K562 (cell line): ENCODE measurements at regions of chrX and their contacts with region 1.

Region 1: GRCh38 chrX:47158131-47158530 is 13.1 kb downstream of the RBM10 start:
- DNase-seq: peak in 3 of 4 experiments; percentile 15 to 32 (median 29)
- ATAC-seq: peak; percentile 81
- H3K4me3 ChIP-seq: no peak overlapping the region
- H3K27ac ChIP-seq: no peak overlapping the region
- H3K4me1 ChIP-seq: peaks cover 0 to 5% of the 10 kb centered on the region in 2 experiments; a peak in 2 of 5 replicates
- H3K27me3 ChIP-seq: no peaks in the 10 kb centered on the region
- CTCF ChIP-seq: 0 out of 6 replicates have a peak, but pooled peaks of 1 of the 3 experiments have one; percentile 18
- EP300 ChIP-seq: no peak
- POLR2A ChIP-seq: no peak
- RAD21 ChIP-seq: no peak

Region 2: DNA sequence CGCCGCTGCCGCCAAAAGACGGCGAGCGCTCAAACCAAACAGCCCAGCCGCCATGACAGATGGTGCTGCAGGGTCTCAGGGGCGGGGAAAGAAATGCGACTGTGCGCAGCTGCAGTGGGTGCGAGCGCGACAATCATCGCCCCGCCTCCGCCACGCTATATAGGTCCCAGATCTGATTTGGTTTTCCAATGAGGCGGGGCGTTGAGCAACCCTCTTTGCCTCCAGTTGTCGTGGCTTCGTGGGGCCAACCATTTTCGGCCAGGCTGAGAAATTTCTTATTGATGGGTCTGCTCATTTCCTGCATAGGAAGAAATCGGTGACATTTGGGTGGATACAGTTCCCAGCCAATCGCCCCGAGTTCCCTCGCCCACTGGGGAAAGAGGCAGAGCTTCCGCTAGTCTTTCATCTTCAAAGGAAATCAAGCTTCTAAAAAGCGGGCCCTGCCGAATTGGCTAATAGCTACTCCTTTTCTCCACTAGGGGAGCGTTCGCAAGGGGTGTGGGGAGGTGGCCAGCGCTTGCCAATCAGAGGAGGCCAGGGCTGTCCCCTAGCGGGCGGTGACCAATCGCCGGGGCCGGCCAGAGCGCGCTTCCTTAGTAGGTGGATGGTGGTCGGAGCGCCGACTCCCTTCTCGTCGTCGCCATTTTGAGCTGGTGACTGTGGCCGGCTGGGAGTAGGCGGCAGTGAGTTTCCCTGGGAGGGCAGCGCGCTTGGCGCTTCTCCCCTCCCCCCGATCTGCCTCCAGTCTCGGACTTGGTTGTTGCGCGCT is 13.3 kb before region 1 on chrX and contains the starts of genes NDUFB11 and RBM10:
- CTCF ChIA-PET with region 1: no interaction called
- POLR2A ChIA-PET with region 1: interaction called, 13 read pairs
- in situ Hi-C with region 1: no loop called
- intact Hi-C with region 1: no loop called
- DNase-seq: peak; percentile 87 to 96 (median 92)
- ATAC-seq: peak; percentile 98
- H3K4me3 ChIP-seq: peak within 1 kb of the TSS; percentile 91
- H3K27ac ChIP-seq: peak within 1 kb of the TSS; percentile 89
- H3K4me1 ChIP-seq: peaks cover 8 to 16% of the 10 kb centered on the region in 2 experiments; a peak in 3 of 5 replicates
- H3K27me3 ChIP-seq: no peaks in the 10 kb centered on the region
- CTCF ChIP-seq: peak; percentile 66 to 80 (median 69)
- EP300 ChIP-seq: no peak
- POLR2A ChIP-seq: peak; percentile 88
- RAD21 ChIP-seq: no peak
- polyA plus RNA-seq, gene NDUFB11: 20.9 to 48.3 TPM
- polyA plus RNA-seq, gene RBM10: 1.1 to 1.7 TPM